Cardiac septum (tissue), 1 donor: ENCODE measurements at regions of chr4 and their contacts with region 1.

Region 1: GRCh38 chr4:100657187-100657586 is 139.4 kb upstream of the EMCN start:
- DNase-seq: no peak

Region 2: DNA sequence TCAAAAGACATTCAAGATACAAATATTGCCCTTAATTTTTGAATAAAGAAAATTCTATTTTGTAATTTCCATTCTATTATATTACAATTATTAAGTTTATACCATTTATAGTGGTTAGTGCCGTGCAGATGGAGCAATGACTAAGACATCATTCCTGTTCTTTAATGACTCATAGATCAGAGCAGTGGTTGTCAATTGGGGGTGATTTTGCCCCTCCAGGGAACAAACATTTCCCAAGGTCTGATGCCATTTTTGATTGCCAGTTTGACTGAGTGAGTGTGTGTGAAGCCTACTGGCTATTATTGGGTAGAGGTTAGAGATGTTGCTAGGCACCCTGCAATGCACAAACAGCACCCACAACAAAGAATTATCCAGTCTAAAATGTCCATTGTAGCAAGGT is 369.0 kb before region 1 on chr4:
- intact Hi-C with region 1: no loop called
- DNase-seq: no peak

Region 3: GRCh38 chr4:100421361-100421978 is 235.7 kb before region 1 on chr4:
- intact Hi-C with region 1: loop called (anchors 5 kb)
- DNase-seq: no peak

Region 4: DNA sequence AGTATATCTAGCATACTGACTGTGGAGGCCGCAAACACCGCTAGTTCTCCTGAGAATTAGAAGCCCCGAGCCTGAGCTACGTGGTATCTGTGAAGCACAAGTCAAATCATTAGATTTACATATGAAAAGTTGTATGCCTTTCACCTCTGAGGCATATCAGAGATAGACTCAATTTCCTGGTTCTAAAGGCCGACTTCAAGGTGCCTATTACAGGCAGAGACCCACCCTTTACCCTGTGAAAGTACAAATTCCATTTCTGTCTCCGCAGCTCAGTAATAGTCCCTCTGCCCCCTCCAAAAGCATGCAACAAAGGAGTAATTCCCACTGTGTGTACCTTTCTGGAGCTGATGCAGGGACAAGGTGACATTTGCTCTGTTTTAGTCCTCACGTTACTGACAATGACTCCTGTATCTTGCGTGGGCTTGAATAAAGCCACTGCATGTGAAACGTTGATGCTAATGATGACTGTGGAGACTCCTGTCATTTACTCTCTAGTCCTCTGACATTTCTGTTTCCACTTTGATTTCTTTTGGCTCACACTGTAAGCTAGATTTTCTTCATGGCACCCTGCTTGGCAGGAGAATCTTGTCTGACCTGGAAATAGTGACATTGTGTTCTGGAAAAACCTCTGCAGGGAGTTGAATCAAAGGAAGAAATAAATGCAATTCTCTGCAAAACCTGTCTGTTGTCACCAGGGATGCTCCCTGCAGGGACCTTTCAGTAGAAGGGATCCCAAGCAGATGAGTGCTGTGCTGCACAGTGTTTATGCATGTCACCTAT is 133.8 kb after region 1 on chr4:
- intact Hi-C with region 1: no loop called
- DNase-seq: no peak